BJ (cell line): ENCODE measurements at regions of chr17 and their contacts with region 1.

Region 1: GRCh38 chr17:40536295-40537171 is 28.7 kb downstream of the CCR7 start:
- DNase-seq: no peak
- H3K4me3 ChIP-seq: no peak overlapping the region
- H3K27me3 ChIP-seq: no peaks in the 10 kb centered on the region
- CTCF ChIP-seq: no peak

Region 2: DNA sequence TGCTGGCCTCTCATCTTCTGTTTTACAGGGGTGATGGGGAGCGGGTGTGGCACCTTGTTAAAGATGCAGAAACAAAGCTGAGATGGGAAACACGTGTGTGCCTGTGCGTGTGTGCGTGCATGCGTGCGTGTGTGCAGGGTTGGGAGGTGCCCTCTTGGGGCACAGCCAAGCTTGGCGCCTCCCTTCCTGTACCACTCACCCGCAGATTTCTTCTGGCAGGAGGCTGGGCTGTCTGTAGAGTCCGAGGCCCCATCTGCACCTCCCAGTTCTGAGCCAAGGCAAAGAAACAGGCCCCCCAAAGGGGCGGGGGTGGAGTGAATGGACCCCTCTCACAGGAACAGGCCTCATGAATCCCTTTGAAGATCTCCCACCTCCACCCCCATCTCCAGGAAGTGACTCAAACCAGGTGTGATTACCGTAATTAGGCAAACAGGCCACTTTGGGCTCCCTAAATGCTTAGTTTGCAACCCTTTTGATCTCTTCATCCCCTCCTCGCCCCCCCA is 56.0 kb before region 1 on chr17:
- CTCF ChIA-PET with region 1: interaction called, 98 read pairs
- POLR2A ChIA-PET with region 1: interaction called, 4 read pairs
- DNase-seq: peak; percentile 47
- H3K4me3 ChIP-seq: no peak overlapping the region
- H3K27me3 ChIP-seq: no peaks in the 10 kb centered on the region
- CTCF ChIP-seq: no peak